Heart right ventricle (tissue), 16 donors: ENCODE measurements at regions of chr16 and their contacts with region 1.

Region 1: DNA sequence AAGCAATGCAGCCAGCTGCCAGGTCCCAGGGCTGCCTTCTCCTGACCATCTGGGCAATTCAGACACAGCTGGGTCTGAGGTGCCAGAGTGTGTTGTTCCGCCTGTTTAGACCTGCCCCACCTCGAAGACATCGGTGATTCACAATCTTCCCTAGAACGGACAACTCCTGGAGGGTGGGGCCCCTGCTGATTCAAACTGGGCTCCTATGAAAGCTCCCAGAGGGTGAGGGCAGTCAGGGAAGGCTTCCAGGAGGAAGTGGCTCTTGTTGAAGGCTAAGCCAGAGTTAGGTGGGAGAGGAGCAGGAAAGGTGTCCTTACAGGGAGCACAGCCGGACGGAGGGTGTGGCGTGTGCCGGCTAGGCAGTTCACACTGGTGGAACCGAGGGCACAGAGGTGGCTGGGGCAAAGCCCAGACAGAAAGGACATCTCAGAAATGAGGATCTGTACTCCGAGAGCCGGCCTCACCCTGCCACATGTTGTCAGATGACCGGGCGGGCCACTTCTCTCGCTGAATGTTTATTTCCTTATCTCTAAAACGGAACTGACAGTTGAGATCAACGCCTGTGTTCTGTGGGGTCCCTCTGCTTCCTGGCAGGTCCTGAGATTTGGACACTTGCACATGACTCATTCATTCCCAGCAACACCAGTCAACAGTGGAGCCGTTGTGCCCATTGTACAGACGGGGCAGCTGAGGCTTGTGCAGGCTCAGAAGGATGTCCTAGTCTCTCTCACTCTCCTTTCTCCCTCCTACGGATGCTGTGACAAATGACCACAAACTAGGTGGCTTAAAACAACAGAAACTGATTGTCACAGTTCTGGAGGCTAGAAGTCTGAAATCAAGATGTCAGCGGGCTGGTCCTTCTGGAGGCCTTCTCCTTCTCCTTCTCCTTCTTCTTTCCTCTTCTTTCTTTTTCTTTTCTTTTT is 26.9 kb upstream of the LITAF start:
- DNase-seq: peak; percentile 33 to 40
- ATAC-seq: peak; percentile 28 to 81 (median 59)
- H3K4me3 ChIP-seq: no peak overlapping the region
- H3K27ac ChIP-seq: peak overlapping the region in 4 of 10 donors; percentile 25 to 94 (median 58)
- H3K4me1 ChIP-seq: peaks cover 0 to 53% (median 0%) of the 10 kb centered on the region in 9 donors
- H3K27me3 ChIP-seq: peaks cover 0 to 7% (median 0%) of the 10 kb centered on the region in 7 donors
- CTCF ChIP-seq: no peak

Region 2: DNA sequence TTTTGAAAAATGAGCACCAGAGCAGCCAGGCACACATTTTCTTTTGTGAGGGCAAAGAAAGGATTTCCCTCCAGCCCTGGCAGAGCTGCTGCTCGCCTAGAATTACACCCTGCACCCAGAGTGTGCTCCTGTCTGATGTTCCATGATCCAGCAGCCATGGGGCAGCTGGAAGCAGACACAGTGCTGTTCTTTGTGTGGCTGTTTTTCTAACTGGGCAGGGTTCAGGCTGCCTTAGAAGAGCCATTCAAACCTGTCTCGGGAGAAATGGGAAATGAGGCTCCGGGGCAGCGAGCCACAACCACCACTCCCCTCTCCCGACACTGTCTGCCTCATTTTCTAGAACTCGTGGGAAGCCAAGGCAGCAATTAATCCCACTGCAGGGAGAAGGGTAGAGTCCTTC is 55.8 kb before region 1 on chr16:
- intact Hi-C with region 1: loop called in 1 of 10 experiments (anchors 2 kb)
- DNase-seq: peak; percentile 32 to 34
- ATAC-seq: peak; percentile 37 to 81 (median 63)
- H3K4me3 ChIP-seq: no peak overlapping the region
- H3K27ac ChIP-seq: peak overlapping the region in 8 of 10 donors; percentile 1 to 84 (median 54)
- H3K4me1 ChIP-seq: peaks cover 0 to 58% (median 28%) of the 10 kb centered on the region in 9 donors
- H3K27me3 ChIP-seq: no peaks in the 10 kb centered on the region
- CTCF ChIP-seq: no peak